HAP-1 (cell line): ENCODE measurements at regions of chr14 and their contacts with region 1.

Region 1: GRCh38 chr14:100645192-100645990 is 58.2 kb upstream of the BEGAIN start:
- DNase-seq: peak; percentile 78 to 94
- H3K4me3 ChIP-seq: no peak overlapping the region
- H3K4me1 ChIP-seq: no peaks in the 10 kb centered on the region
- H3K27me3 ChIP-seq: no peaks in the 10 kb centered on the region

Region 2: DNA sequence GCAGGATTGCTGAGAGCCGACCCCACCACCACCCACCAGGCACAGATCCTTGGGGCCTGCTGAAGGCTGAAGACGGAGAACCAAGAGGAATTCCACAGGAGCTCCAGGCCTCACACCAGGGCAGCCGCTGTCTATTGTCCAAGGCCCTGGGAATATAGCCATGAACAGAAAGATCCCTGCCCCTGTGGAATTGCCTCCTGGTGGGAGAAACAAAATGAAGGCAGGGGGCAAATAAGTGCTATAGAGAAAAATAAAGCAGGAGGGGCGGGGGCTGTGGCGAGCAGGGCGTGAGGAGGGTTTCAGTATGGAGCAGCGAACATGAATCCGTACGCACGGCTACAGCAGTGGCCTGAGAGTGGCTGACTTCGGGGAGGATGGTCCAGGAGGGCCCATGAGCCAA is 756.1 kb before region 1 on chr14:
- in situ Hi-C with region 1: no loop called
- DNase-seq: no peak
- H3K4me3 ChIP-seq: no peak overlapping the region
- H3K4me1 ChIP-seq: peaks cover 3% of the 10 kb centered on the region; the same call in 1 of the 2 replicates
- H3K27me3 ChIP-seq: no peaks in the 10 kb centered on the region

Region 3: DNA sequence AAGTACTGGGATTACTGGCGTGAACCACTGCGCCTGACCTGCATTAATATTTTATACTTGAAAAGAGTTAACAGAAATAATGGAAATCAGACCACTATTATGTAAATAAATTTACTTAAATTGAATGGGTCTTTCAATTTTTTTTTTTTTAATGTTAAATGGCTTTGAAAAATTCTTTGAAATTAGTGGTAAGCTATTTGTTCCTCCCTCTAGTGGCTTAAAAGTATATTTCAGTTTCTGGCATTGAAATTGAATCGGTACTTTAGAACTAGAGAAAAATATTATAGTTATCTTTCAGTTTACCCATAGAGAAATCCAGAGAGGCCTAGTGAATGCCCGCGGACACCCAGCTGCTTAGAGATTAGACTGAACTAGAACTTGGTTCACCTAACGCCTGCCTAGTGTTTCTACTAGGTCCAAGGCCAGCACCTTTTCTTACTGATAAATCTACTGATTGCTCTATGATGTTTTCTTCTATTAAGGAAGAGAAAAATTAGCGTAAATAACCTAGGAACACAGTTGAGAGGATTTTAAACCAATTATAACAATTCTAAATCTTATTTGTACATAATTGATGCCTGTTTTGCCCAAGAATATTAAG is 745.7 kb before region 1 on chr14:
- in situ Hi-C with region 1: no loop called
- DNase-seq: peak in 1 of 2 experiments; percentile 26
- H3K4me3 ChIP-seq: no peak overlapping the region
- H3K4me1 ChIP-seq: peaks cover 6% of the 10 kb centered on the region
- H3K27me3 ChIP-seq: no peaks in the 10 kb centered on the region

Region 4: GRCh38 chr14:100263144-100263543 is 382.2 kb before region 1 on chr14:
- in situ Hi-C with region 1: no loop called
- DNase-seq: no peak
- H3K4me3 ChIP-seq: no peak overlapping the region
- H3K4me1 ChIP-seq: peaks cover 16% of the 10 kb centered on the region
- H3K27me3 ChIP-seq: no peaks in the 10 kb centered on the region

Region 5: GRCh38 chr14:100383727-100384158 is 261.6 kb before region 1 on chr14:
- in situ Hi-C with region 1: loop called (anchors 5 kb)
- DNase-seq: peak; percentile 53 to 80
- H3K4me3 ChIP-seq: no peak overlapping the region
- H3K4me1 ChIP-seq: peaks cover 4% of the 10 kb centered on the region
- H3K27me3 ChIP-seq: no peaks in the 10 kb centered on the region

Region 6: DNA sequence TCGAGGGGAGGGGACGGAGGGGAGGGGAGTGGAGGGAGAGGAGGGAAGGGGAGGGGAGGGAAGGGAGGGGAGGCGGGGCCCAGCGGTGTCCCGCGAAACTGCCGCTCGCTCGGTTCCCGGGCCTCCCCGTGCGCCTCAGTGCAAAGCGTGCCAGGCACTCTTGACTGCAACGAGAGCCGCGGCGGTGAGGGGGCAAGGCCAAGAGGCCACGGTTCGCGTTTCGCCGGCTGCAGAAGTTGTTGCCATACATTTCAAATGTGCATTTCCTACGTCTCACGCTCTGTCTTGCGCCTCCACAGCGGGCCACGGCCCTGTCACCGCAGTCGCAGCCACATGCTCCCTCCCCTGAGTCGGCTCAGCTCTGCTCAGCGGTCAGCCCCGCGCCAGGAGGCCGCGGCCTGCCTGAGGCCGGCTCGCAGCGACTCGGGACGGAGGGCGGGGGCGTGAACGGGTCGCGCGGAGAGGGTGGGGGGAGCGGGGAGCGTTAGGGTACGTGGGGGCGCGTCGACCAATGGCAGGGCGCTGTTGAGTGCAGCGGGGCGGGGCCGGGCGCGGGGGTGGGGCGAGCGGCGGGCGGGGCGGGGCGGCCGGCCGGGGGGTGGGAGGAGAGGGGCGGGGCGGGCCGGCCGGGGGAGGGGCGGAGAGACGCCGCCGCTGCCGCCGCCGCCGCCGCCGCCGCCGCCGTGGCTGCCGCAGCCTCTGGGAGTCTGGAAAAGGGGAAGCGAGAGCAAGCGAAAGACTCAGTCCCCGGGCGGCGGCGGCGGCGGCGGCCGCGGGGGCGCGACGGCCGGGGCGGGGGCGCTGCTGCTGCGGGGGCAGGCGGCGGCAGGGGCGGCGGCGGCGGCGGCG is 1115.9 kb after region 1 on chr14 and contains the start of gene PPP2R5C:
- in situ Hi-C with region 1: no loop called
- DNase-seq: peak; percentile 73 to 95
- H3K4me3 ChIP-seq: peak within 1 kb of the TSS; percentile 63
- H3K4me1 ChIP-seq: peaks cover 7% of the 10 kb centered on the region
- H3K27me3 ChIP-seq: no peaks in the 10 kb centered on the region; the same call in 1 of the 2 replicates